GM18951 (cell line): ENCODE measurements at regions of chr11 and their contacts with region 1.

Region 1: GRCh38 chr11:1049431-1049891 is 12.9 kb upstream of the MUC6 start:
- POLR2A ChIP-seq: no peak

Region 2: GRCh38 chr11:441418-442274 is 607.8 kb before region 1 on chr11 and contains the start of gene ANO9:
- in situ Hi-C with region 1: no loop called
- POLR2A ChIP-seq: peak; percentile 57

Region 3: DNA sequence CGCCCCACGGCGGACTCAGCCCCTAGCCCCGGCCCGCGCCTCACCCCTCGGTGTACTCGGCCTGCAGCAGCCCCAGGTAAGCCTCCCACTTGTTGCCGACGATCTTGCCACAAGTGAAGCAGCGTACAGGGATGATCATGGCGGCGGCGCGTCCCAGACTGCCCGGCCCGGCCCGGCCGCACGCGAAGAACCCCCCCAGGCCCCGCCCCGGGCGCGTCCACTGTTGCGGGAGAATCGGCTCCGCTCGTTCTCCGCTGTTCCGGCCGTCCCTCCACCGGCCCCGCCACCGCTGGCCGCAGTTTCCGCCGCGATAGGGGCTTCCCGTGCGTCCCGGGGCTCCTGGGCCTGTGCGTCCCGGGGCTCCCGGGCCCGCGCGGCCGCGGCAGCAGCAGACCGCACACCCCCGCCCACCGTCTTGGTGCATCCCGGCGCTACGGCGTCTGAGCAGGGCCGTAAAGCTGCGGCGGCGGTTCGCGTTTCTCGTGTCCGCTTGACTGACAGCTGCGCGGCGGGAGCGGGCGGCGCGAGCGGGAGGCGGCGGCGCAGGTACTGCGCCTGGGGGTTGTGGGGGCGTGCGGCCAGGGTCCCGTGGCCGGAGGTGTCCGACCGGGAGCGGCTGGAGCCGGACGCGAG is 207.0 kb before region 1 on chr11 and contains the starts of genes POLR2L and TSPAN4:
- in situ Hi-C with region 1: no loop called
- POLR2A ChIP-seq: peak; percentile 99

Region 4: DNA sequence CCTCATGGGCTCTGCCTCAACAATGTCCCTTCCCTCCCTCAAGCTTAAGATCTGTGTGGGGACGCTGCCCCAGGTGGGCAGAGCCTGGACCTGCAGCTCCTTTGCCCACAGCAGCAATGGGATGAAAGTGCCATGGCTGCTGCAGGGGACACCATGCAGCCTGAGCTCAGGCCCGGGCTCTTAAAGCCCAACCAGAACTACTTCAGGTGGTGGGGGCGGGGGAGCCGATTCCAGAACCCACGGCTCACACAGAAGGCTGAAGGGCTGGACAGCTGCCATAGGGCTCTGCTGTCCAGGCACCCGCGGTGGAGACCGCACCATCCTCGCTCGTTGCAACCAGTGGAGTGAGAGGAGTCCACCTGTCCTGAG is 151.3 kb before region 1 on chr11:
- in situ Hi-C with region 1: loop called (anchors 25 kb)
- POLR2A ChIP-seq: no peak